Activated CD4-positive, alpha-beta T cell treated with anti-CD3 and anti-CD28 coated beads, Interleukin-2, amount 10 ng/mL, durations not matched to agents 24 days and 14 days (primary cell): ENCODE measurements at regions of chr12 and their contacts with region 1.

Region 1: GRCh38 chr12:69157023-69157655 is 82.2 kb upstream of the CPSF6 start:
- DNase-seq: peak; percentile 98
- H3K4me3 Mint-ChIP-seq: peak overlapping the region; percentile 48
- H3K27ac Mint-ChIP-seq: peak overlapping the region; percentile 72
- H3K4me1 Mint-ChIP-seq: peaks cover 37% of the 10 kb centered on the region
- H3K27me3 Mint-ChIP-seq: no peaks in the 10 kb centered on the region

Region 2: DNA sequence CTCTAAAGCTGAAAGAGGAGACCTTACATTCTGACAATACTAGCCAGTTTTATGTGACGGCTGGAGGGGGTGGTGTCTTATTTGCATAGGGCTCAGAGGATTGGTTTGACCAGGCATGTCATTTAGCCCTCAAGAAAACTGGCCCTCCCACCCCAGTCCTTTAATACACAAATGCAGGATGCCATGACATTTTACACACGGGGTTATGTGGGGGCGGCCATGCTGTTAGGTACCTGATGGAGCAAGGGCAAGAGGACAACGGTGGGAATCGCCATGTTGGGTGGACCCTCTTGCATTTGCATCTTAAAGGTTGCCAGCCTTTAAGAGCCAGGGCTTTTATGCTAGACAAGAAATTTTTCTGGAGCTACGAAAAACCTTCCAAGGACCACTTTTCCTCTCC is 325.9 kb before region 1 on chr12:
- intact Hi-C with region 1: loop called (anchors 10 kb)
- DNase-seq: peak; percentile 52
- H3K4me3 Mint-ChIP-seq: no peak overlapping the region
- H3K27ac Mint-ChIP-seq: no peak overlapping the region
- H3K4me1 Mint-ChIP-seq: peaks cover 19% of the 10 kb centered on the region
- H3K27me3 Mint-ChIP-seq: no peaks in the 10 kb centered on the region

Region 3: GRCh38 chr12:68866950-68867349 is 290.2 kb before region 1 on chr12:
- intact Hi-C with region 1: loop called (anchors 1 kb)
- DNase-seq: no peak
- H3K4me3 Mint-ChIP-seq: no peak overlapping the region
- H3K27ac Mint-ChIP-seq: no peak overlapping the region
- H3K4me1 Mint-ChIP-seq: peaks cover 19% of the 10 kb centered on the region
- H3K27me3 Mint-ChIP-seq: no peaks in the 10 kb centered on the region

Region 4: GRCh38 chr12:68915055-68915454 is 242.1 kb before region 1 on chr12:
- intact Hi-C with region 1: no loop called
- DNase-seq: no peak
- H3K4me3 Mint-ChIP-seq: peak overlapping the region; percentile 28
- H3K27ac Mint-ChIP-seq: peak overlapping the region; percentile 72
- H3K4me1 Mint-ChIP-seq: peaks cover 15% of the 10 kb centered on the region
- H3K27me3 Mint-ChIP-seq: no peaks in the 10 kb centered on the region

Region 5: GRCh38 chr12:69254046-69254445 is 96.9 kb after region 1 on chr12:
- intact Hi-C with region 1: loop called (anchors 1 kb)
- DNase-seq: peak; percentile 77
- H3K4me3 Mint-ChIP-seq: no peak overlapping the region
- H3K27ac Mint-ChIP-seq: peak overlapping the region; percentile 43
- H3K4me1 Mint-ChIP-seq: peaks cover 27% of the 10 kb centered on the region
- H3K27me3 Mint-ChIP-seq: no peaks in the 10 kb centered on the region

Region 6: DNA sequence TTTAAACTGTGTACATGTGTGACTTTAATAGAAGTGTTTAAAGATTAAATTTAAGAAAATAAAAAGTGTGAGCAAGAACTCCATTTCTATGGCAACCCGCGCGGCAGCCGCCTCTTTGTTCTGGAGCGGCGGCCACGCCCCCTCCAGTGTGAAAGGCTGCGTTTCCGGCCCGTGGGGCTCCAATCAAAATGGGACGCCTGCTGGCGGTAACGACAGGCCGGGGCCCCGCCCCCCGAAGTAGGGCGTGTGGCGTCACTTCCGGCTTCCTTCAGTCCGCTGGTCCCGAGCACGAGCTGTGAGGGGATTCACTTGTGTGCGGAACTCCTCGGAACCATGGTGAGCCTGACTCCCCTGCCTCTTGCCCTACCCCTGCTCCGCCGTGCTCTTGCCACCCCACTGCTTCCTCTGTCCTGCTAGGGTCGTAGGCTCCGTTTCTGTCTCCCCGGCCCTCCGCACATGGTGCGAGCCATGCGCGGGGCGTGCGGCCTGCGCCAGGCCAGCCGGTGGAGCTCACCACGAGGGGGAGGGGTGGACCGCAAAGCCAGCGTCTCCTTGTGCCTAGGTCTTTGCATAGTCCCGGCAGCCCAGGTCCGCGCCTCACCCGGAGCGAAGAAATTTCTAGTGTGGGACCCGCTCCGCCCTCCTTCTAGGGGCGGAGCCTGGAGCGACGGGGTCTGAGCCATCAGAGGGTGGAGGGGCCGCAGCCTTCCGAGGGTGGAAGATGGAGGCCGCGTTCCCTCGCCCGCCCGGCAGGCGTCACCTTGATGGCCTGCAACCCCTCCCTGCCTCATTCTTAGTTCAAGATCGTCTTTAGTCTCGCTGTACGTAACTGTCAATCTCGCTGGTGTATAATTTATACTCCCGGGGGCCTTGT is 428.3 kb after region 1 on chr12 and contains the start of gene CCT2:
- intact Hi-C with region 1: loop called (anchors 1 kb)
- DNase-seq: peak; percentile 99
- H3K4me3 Mint-ChIP-seq: peak within 1 kb of the TSS; percentile 99
- H3K27ac Mint-ChIP-seq: peak within 1 kb of the TSS; percentile 99
- H3K4me1 Mint-ChIP-seq: peaks cover 14% of the 10 kb centered on the region
- H3K27me3 Mint-ChIP-seq: no peaks in the 10 kb centered on the region
- total RNA-seq, gene CCT2: 490 and 511 TPM in 2 replicates